Activated CD8-positive, alpha-beta T cell treated with anti-CD3 and anti-CD28 coated beads, Interleukin-2, amount 10 ng/mL, durations not matched to agents 7 days and 5 days (primary cell): ENCODE measurements at regions of chrX and their contacts with region 1.

Region 1: GRCh38 chrX:71283403-71284143 is at the start of gene NONO:
- DNase-seq: peak; percentile 94
- ATAC-seq: peak; percentile 85
- H3K4me3 Mint-ChIP-seq: peak within 1 kb of the TSS; percentile 97
- H3K27ac Mint-ChIP-seq: peak within 1 kb of the TSS; percentile 100
- H3K4me1 Mint-ChIP-seq: peaks cover 17% of the 10 kb centered on the region
- H3K27me3 Mint-ChIP-seq: no peaks in the 10 kb centered on the region
- total RNA-seq, gene NONO: 446 to 478 TPM

Region 2: GRCh38 chrX:71198066-71198465 is 85.5 kb before region 1 on chrX:
- CTCF ChIA-PET with region 1: interaction called, 6 read pairs
- POLR2A ChIA-PET with region 1: interaction called, 22 read pairs
- DNase-seq: no peak
- ATAC-seq: peak; percentile 34
- H3K4me3 Mint-ChIP-seq: peak overlapping the region; percentile 86
- H3K27ac Mint-ChIP-seq: peak overlapping the region; percentile 86
- H3K4me1 Mint-ChIP-seq: peaks cover 13% of the 10 kb centered on the region
- H3K27me3 Mint-ChIP-seq: no peaks in the 10 kb centered on the region

Region 3: GRCh38 chrX:71254092-71254941 is 29.3 kb before region 1 on chrX and contains the start of gene ZMYM3:
- CTCF ChIA-PET with region 1: interaction called, 11 read pairs
- POLR2A ChIA-PET with region 1: interaction called, 40 read pairs
- DNase-seq: peak; percentile 87
- ATAC-seq: peak; percentile 92
- H3K4me3 Mint-ChIP-seq: peak within 1 kb of the TSS; percentile 92
- H3K27ac Mint-ChIP-seq: peak within 1 kb of the TSS; percentile 92
- H3K4me1 Mint-ChIP-seq: peaks cover 34% of the 10 kb centered on the region
- H3K27me3 Mint-ChIP-seq: no peaks in the 10 kb centered on the region
- total RNA-seq, gene ZMYM3: 31.9 to 33.4 TPM

Region 4: GRCh38 chrX:71365876-71366673 is 82.5 kb after region 1 on chrX and contains the start of gene TAF1:
- CTCF ChIA-PET with region 1: interaction called, 3 read pairs
- POLR2A ChIA-PET with region 1: interaction called, 43 read pairs
- DNase-seq: peak; percentile 95
- ATAC-seq: peak; percentile 93
- H3K4me3 Mint-ChIP-seq: peak within 1 kb of the TSS; percentile 97
- H3K27ac Mint-ChIP-seq: peak within 1 kb of the TSS; percentile 99
- H3K4me1 Mint-ChIP-seq: peaks cover 20% of the 10 kb centered on the region
- H3K27me3 Mint-ChIP-seq: no peaks in the 10 kb centered on the region
- total RNA-seq, gene TAF1: 35.0 to 43.6 TPM